Natural killer cell (primary cell): ENCODE measurements at regions of chr7 and their contacts with region 1.

Region 1: GRCh38 chr7:135980665-135981180 is 3.6 kb upstream of the MTPN start:
- DNase-seq: peak; percentile 56 to 87
- ATAC-seq: peak; percentile 63 to 85 (median 78)
- H3K4me3 ChIP-seq: peak overlapping the region; percentile 38
- H3K4me3 Mint-ChIP-seq: peak overlapping the region; percentile 87
- H3K27ac ChIP-seq: peak overlapping the region; percentile 81
- H3K27ac Mint-ChIP-seq: peak overlapping the region; percentile 88 to 92
- H3K4me1 ChIP-seq: peaks cover 26% of the 10 kb centered on the region
- H3K4me1 Mint-ChIP-seq: peaks cover 64 to 68% of the 10 kb centered on the region in 2 donors
- H3K27me3 ChIP-seq: no peaks in the 10 kb centered on the region
- H3K27me3 Mint-ChIP-seq: no peaks in the 10 kb centered on the region
- CTCF ChIP-seq: no peak

Region 2: GRCh38 chr7:135509903-135510602 is 470.7 kb before region 1 on chr7 and contains the start of gene CNOT4:
- intact Hi-C with region 1: loop called (anchors 1 kb)
- DNase-seq: peak; percentile 87 to 98
- ATAC-seq: peak; percentile 91 to 98 (median 94)
- H3K4me3 ChIP-seq: peak within 1 kb of the TSS; percentile 88
- H3K4me3 Mint-ChIP-seq: no peak within 1 kb of the TSS
- H3K27ac ChIP-seq: peak within 1 kb of the TSS; percentile 95
- H3K27ac Mint-ChIP-seq: no peak within 1 kb of the TSS
- H3K4me1 ChIP-seq: peaks cover 12% of the 10 kb centered on the region
- H3K4me1 Mint-ChIP-seq: peaks cover 6 to 8% of the 10 kb centered on the region in 2 donors
- H3K27me3 ChIP-seq: no peaks in the 10 kb centered on the region
- H3K27me3 Mint-ChIP-seq: no peaks in the 10 kb centered on the region
- CTCF ChIP-seq: no peak
- total RNA-seq, gene CNOT4: 40.6 to 47.1 (median 40.7) TPM

Region 3: DNA sequence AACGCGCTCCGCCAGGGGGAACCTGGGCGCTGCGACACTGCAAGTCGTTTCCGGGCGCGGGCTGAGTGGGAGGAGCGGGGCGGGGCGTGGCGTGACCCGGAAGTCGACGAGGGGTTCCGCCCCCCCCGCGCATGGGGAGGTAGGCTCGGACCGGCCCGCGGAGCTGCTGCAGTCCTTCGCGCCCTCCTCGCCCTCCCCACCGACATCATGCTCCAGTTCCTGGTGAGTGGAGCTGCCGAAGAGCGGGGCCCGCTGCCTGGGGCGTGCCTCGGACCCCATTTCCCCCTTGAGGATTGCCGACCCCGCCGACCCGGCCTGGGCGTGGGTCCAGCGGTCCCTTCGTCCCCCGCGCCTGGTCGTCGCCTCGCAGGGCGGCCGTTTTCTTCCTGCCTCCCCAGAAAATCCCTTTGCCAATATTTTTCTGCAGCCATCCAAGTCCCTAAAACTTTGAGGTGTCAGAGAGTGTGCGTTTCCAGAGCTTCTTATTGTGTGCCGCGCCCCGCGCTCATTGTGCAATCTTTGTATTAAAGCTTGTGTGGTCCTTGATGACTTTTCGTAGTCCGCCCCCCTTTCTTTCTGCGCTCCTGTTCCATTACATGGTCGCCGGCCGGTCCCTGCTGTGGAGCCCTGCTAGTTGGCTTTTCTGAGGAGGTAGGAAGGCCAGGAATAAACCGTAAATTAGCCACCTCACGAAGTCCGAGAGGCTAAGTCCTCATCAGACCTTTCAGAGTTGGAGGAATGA is 318.2 kb before region 1 on chr7 and contains the start of gene STMP1:
- intact Hi-C with region 1: loop called (anchors 2 kb)
- DNase-seq: peak; percentile 96 to 97
- ATAC-seq: peak; percentile 99
- H3K4me3 ChIP-seq: peak within 1 kb of the TSS; percentile 96
- H3K4me3 Mint-ChIP-seq: peak within 1 kb of the TSS; percentile 99
- H3K27ac ChIP-seq: peak within 1 kb of the TSS; percentile 63
- H3K27ac Mint-ChIP-seq: peak within 1 kb of the TSS; percentile 88 to 93
- H3K4me1 ChIP-seq: peaks cover 19% of the 10 kb centered on the region
- H3K4me1 Mint-ChIP-seq: peaks cover 18 to 28% of the 10 kb centered on the region in 2 donors
- H3K27me3 ChIP-seq: no peaks in the 10 kb centered on the region
- H3K27me3 Mint-ChIP-seq: no peaks in the 10 kb centered on the region
- CTCF ChIP-seq: peak; percentile 75
- total RNA-seq, gene STMP1: 19.4 to 25.8 (median 22.3) TPM

Region 4: DNA sequence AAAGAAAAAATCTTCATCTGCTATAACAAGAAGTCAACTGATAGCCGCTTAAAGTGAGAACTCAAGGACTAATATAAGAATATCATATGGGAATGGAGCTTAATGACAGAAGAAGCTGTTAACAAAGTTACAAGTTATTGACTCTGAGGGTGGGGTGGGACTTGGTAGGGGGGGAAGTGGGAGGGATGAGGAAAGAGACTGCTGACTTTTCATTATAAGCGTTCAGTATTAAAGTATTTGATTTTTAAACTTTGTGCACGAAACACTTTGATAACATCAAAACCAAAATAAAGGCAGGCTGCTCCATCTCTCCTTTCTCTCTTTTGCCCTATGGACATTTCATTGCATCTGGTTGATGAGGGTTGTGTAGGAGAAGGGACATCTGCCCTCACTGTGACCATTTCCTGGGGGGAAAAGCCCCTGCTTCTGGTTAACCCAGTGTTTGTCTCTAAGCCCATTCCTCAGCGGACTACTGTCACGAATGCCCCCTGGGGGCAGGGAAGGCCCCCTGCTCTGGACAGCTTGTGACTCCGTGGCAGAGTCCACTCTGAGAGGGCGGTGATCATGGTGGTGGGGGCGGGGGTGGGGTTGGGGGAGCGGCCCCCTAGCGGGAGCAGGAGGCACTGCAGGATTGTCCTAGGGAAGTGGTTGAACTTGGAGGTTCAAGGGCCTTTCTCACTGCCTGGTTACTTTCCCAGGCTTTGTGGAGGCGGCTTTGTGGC is 270.1 kb before region 1 on chr7:
- intact Hi-C with region 1: no loop called
- DNase-seq: peak in 1 of 2 donors; percentile 34
- ATAC-seq: peak; percentile 38 to 61 (median 44)
- H3K4me3 ChIP-seq: no peak overlapping the region
- H3K4me3 Mint-ChIP-seq: no peak overlapping the region
- H3K27ac ChIP-seq: no peak overlapping the region
- H3K27ac Mint-ChIP-seq: no peak overlapping the region
- H3K4me1 ChIP-seq: no peaks in the 10 kb centered on the region
- H3K4me1 Mint-ChIP-seq: no peaks in the 10 kb centered on the region
- H3K27me3 ChIP-seq: no peaks in the 10 kb centered on the region
- H3K27me3 Mint-ChIP-seq: no peaks in the 10 kb centered on the region
- CTCF ChIP-seq: peak; percentile 64

Region 5: DNA sequence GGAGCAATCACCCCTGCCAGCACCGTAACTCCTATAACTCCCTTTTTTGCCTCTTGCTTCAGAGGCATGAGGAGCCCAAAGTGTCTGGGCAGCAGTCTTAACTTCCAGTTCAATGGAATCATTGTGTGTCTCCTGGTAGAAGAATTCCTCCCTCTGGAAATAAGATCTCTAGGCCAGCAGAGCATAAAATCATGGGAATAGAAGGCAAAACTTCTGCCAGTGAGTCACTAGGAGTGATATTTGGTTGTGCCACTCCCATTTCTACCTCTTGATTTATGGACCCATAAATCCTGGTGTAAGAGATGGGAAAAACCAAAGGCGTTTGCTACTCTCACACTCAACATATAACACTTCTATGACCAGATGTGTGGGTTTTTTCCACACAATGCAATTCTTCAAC is 127.2 kb before region 1 on chr7:
- intact Hi-C with region 1: no loop called
- DNase-seq: no peak
- ATAC-seq: no peak
- H3K4me3 ChIP-seq: no peak overlapping the region
- H3K4me3 Mint-ChIP-seq: no peak overlapping the region
- H3K27ac ChIP-seq: no peak overlapping the region
- H3K27ac Mint-ChIP-seq: no peak overlapping the region
- H3K4me1 ChIP-seq: no peaks in the 10 kb centered on the region
- H3K4me1 Mint-ChIP-seq: peaks cover 7 to 8% of the 10 kb centered on the region in 2 donors
- H3K27me3 ChIP-seq: no peaks in the 10 kb centered on the region
- H3K27me3 Mint-ChIP-seq: peaks cover 0 to 8% of the 10 kb centered on the region in 2 donors
- CTCF ChIP-seq: no peak

Region 6: DNA sequence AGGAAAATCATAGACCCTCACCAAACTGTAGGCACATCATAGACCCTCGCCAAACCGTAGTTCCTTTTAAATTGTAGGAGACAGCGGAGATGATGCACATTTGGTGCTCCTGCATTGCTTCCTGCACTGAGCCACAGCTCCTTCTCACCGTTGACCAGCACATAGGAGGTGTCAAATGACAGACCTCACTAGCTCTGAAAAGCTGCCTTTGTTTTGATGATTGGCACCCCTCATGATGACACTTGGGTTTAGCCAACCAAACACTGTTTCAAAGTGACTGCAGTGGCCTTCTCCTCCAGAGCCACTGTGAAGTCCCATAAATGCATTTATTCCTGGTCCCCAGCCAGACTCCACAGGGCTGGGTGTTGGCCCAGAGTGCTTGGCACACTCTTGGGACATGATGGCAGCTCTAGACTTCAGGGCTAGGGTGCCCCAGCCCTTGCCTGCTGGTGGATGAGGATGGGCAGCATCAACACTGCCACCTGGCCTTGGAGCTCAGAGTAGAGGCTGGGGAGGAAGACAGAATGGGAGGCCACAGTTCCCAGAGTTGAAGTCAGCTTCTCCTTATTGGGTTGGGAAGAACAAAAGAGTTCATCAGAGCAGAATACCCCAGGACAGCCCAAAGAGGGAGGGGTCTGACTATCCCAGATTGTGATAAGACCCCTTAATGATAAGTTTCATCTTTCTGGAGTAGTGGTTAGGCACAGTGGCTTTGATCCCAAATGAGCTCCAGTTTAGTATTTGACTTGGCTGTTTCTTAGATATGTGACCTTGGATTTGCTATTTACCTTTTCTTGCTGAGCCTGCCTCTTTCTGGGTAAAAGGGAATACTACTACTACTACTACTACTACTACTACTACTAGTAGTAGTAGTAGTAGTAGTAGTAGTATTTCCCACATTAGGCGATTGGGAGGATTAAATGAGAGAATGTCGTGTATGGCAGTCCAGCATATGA is 78.9 kb before region 1 on chr7:
- intact Hi-C with region 1: loop called (anchors 5 kb)
- DNase-seq: peak; percentile 11 to 26
- ATAC-seq: peak; percentile 85 to 91 (median 90)
- H3K4me3 ChIP-seq: no peak overlapping the region
- H3K4me3 Mint-ChIP-seq: peak overlapping the region; percentile 78
- H3K27ac ChIP-seq: peak overlapping the region; percentile 29
- H3K27ac Mint-ChIP-seq: peak overlapping the region; percentile 62 to 73
- H3K4me1 ChIP-seq: peaks cover 55% of the 10 kb centered on the region
- H3K4me1 Mint-ChIP-seq: peaks cover 54 to 65% of the 10 kb centered on the region in 2 donors
- H3K27me3 ChIP-seq: no peaks in the 10 kb centered on the region
- H3K27me3 Mint-ChIP-seq: peaks cover 6 to 21% of the 10 kb centered on the region in 2 donors
- CTCF ChIP-seq: no peak

Region 7: GRCh38 chr7:136030862-136031318 is 50.2 kb after region 1 on chr7:
- intact Hi-C with region 1: no loop called
- DNase-seq: no peak
- ATAC-seq: no peak
- H3K4me3 ChIP-seq: no peak overlapping the region
- H3K4me3 Mint-ChIP-seq: no peak overlapping the region
- H3K27ac ChIP-seq: no peak overlapping the region
- H3K27ac Mint-ChIP-seq: no peak overlapping the region
- H3K4me1 ChIP-seq: no peaks in the 10 kb centered on the region
- H3K4me1 Mint-ChIP-seq: no peaks in the 10 kb centered on the region
- H3K27me3 ChIP-seq: no peaks in the 10 kb centered on the region
- H3K27me3 Mint-ChIP-seq: no peaks in the 10 kb centered on the region
- CTCF ChIP-seq: no peak